ENCODE measurements at regions of chr6 and their contacts with region 1.

Region 1: GRCh38 chr6:165456286-165456685 is 146.9 kb upstream of the C6orf118 start:
- DNase-seq: no peak
- H3K4me3 ChIP-seq: no peak overlapping the region
- H3K27ac ChIP-seq: no peak overlapping the region
- H3K27me3 ChIP-seq: no peaks in the 10 kb centered on the region
- CTCF ChIP-seq: no peak

Region 2: GRCh38 chr6:165439928-165440554 is 16.2 kb before region 1 on chr6:
- CTCF ChIA-PET with region 1: interaction called, 11 read pairs
- POLR2A ChIA-PET with region 1: no interaction called
- DNase-seq: peak; percentile 1
- H3K4me3 ChIP-seq: no peak overlapping the region
- H3K27ac ChIP-seq: no peak overlapping the region
- H3K27me3 ChIP-seq: no peaks in the 10 kb centered on the region
- CTCF ChIP-seq: peak; percentile 47

Region 3: DNA sequence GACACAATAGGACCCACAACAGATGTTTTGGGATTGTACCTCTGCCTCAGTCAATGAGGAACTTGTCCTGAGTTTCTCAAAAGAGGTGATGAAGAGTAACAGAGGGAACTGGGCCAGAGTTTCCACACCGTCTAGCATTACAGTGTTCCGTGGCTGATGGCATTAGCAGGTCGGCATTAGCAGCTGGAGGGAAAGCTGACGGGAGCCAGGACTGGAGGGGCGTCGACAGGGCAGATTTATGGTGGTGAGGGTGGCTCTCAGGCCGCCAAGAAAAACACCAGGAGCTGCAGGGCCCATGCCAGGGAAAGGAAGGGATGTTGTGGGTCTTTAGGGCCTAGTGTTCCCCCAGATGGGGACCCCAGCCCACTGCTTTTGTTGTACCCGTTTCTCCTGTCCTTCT is 554.3 kb after region 1 on chr6:
- CTCF ChIA-PET with region 1: no interaction called
- POLR2A ChIA-PET with region 1: no interaction called
- DNase-seq: no peak
- H3K4me3 ChIP-seq: no peak overlapping the region
- H3K27ac ChIP-seq: no peak overlapping the region
- H3K27me3 ChIP-seq: no peaks in the 10 kb centered on the region
- CTCF ChIP-seq: no peak